ENCODE measurements at regions of chr4 and their contacts with region 1.

Region 1: GRCh38 chr4:11021333-11021732 is 336.8 kb upstream of the CLNK start:
- DNase-seq: no peak
- H3K4me3 ChIP-seq: no peak overlapping the region
- H3K27ac ChIP-seq: no peak overlapping the region
- H3K4me1 ChIP-seq: no peaks in the 10 kb centered on the region
- H3K27me3 ChIP-seq: no peaks in the 10 kb centered on the region
- CTCF ChIP-seq: no peak

Region 2: GRCh38 chr4:10924274-10924673 is 97.1 kb before region 1 on chr4:
- CTCF ChIA-PET with region 1: no interaction called
- dilution Hi-C with region 1: loop called (anchors 5 kb)
- in situ Hi-C with region 1: no loop called
- intact Hi-C with region 1: no loop called
- DNase-seq: no peak
- H3K4me3 ChIP-seq: no peak overlapping the region
- H3K27ac ChIP-seq: no peak overlapping the region
- H3K4me1 ChIP-seq: no peaks in the 10 kb centered on the region
- H3K27me3 ChIP-seq: no peaks in the 10 kb centered on the region
- CTCF ChIP-seq: no peak

Region 3: GRCh38 chr4:10949039-10949733 is 72.1 kb before region 1 on chr4:
- CTCF ChIA-PET with region 1: no interaction called
- dilution Hi-C with region 1: no loop called
- in situ Hi-C with region 1: no loop called
- intact Hi-C with region 1: no loop called
- DNase-seq: no peak
- H3K4me3 ChIP-seq: no peak overlapping the region
- H3K27ac ChIP-seq: no peak overlapping the region
- H3K4me1 ChIP-seq: no peaks in the 10 kb centered on the region
- H3K27me3 ChIP-seq: no peaks in the 10 kb centered on the region
- CTCF ChIP-seq: no peak

Region 4: DNA sequence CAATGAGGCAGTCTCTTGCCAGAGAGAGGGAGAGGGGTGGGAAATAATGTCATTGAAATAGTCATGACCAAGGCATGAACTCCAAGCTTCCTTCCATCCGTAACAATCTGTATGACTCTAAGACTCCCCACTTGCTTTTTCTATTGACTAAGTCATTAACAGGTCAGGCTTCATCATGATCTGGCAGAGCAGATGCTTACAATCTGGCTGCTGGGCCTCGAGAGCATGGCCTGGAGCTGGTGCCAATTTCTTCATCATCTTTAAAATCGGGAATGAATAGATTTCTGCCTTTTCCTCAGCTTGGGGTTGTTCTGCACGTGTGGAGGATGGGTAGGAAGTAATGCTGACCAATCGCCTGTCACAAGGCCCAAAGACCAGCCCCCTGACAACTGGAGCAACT is 56.1 kb before region 1 on chr4:
- CTCF ChIA-PET with region 1: no interaction called
- dilution Hi-C with region 1: loop called (anchors 5 kb)
- in situ Hi-C with region 1: no loop called
- intact Hi-C with region 1: no loop called
- DNase-seq: no peak
- H3K4me3 ChIP-seq: no peak overlapping the region
- H3K27ac ChIP-seq: no peak overlapping the region
- H3K4me1 ChIP-seq: no peaks in the 10 kb centered on the region
- H3K27me3 ChIP-seq: no peaks in the 10 kb centered on the region
- CTCF ChIP-seq: no peak

Region 5: DNA sequence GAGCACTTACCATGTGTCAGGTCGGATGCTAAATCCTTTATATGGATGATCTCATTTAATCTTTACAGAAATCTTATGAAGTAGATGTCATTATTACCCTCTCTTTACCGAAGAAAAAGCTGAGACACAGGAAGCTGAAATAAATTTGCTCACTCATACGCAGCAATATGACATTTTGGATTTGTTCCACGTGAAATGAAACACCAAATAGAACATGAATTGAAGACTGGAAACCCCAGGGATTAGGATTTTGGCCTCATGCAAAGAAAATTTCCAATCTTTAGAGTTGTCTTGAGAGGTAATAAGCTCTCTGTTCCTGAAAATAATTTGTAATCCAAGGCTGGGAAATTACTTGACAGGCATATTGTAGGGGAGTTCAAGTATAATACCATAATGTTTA is 17.6 kb after region 1 on chr4:
- CTCF ChIA-PET with region 1: no interaction called
- dilution Hi-C with region 1: no loop called
- in situ Hi-C with region 1: no loop called
- intact Hi-C with region 1: no loop called
- DNase-seq: no peak
- H3K4me3 ChIP-seq: no peak overlapping the region
- H3K27ac ChIP-seq: no peak overlapping the region
- H3K4me1 ChIP-seq: no peaks in the 10 kb centered on the region
- H3K27me3 ChIP-seq: no peaks in the 10 kb centered on the region
- CTCF ChIP-seq: no peak

Region 6: DNA sequence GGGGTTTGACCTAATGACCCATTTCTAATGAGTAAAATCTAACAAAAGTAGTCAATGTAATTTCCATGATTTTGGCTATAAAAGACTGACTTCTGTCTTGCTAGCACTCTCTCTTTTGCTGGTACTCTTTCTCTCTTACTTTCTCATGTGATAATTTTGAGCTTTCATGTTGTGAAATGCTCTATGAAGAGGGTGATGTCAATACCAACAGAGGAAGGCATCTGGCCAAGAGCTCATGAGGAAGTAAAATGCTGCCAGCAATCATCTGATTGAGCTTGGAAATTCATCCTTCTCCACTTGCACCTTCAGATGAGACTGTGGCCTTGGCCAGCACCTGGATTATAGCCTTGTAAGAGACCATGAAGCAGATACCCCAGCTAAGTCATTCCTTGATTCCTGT is 59.7 kb after region 1 on chr4:
- CTCF ChIA-PET with region 1: no interaction called
- dilution Hi-C with region 1: loop called (anchors 5 kb)
- in situ Hi-C with region 1: no loop called
- intact Hi-C with region 1: no loop called
- DNase-seq: no peak
- H3K4me3 ChIP-seq: no peak overlapping the region
- H3K27ac ChIP-seq: no peak overlapping the region
- H3K4me1 ChIP-seq: no peaks in the 10 kb centered on the region
- H3K27me3 ChIP-seq: no peaks in the 10 kb centered on the region
- CTCF ChIP-seq: no peak